Lower lobe of right lung (tissue), 2 donors: ENCODE measurements at regions of chr2 and their contacts with region 1.

Region 1: DNA sequence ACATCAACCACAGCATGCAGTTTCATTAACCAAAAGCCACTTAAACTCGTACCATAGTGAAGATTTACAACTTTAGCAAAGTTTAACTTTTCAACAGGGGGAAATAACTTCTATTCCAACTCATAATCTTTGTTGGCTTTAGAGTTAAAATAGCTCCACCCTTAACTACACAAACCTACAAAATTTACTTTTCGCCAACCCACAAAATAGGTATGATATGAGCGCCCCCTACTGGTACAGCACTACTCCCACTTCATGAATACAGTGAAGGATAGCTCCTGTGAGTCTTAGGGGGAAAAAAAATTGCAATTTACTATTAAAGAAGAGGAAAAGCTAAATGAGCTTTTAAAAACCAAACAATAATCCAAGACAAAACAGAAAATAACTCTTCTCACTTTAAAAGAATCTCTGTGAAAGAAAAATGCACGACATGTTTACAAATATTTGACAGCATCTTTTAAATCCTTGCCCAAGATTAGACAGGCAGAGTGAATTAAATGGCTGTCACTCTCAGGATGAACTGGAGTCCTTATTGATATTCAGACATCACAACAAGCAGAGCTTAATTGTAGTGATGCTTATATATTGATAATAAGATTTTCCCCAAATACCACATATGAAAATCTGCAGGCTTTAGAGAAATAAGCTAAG is 32.2 kb downstream of the TMEFF2 start:
- DNase-seq: no peak
- ATAC-seq: peak; percentile 90
- H3K4me3 ChIP-seq: no peak overlapping the region
- H3K27ac ChIP-seq: no peak overlapping the region
- H3K4me1 ChIP-seq: peaks cover 10% of the 10 kb centered on the region
- H3K27me3 ChIP-seq: no peaks in the 10 kb centered on the region
- CTCF ChIP-seq: peak; percentile 92

Region 2: GRCh38 chr2:191811807-191812602 is 350.5 kb before region 1 on chr2:
- intact Hi-C with region 1: loop called (anchors 5 kb)
- DNase-seq: no peak
- ATAC-seq: peak; percentile 82 to 92
- H3K4me3 ChIP-seq: no peak overlapping the region
- H3K27ac ChIP-seq: no peak overlapping the region
- H3K4me1 ChIP-seq: peaks cover 4% of the 10 kb centered on the region
- H3K27me3 ChIP-seq: no peaks in the 10 kb centered on the region
- CTCF ChIP-seq: peak; percentile 79